ENCODE measurements at regions of chr4 and their contacts with region 1.

Region 1: DNA sequence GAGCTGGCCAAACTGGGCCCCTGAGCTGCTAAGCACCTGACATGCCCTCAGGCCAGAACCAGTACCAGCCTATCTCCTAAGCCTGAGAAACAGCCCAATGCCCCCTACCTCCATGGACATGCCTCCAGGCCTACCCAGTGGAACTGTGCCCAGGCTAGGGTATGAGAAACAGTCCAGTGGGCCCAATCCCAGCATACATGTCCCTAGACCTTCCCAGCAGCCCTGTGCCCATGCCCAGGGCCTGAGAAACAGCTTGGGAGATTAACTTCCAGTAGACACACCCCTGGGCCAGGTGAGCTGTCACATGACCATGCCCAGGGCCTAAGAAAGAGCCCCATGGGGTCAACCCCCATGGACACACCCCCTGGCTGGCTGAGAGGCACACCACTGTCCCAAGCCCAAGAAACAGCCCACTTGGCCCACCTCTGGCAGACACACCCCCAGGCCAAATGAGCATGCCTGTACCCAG is 78.8 kb downstream of the CBR4 start:
- DNase-seq: no peak
- H3K4me3 Mint-ChIP-seq: no peak overlapping the region
- H3K27ac Mint-ChIP-seq: no peak overlapping the region
- H3K4me1 Mint-ChIP-seq: no peaks in the 10 kb centered on the region
- H3K27me3 Mint-ChIP-seq: no peaks in the 10 kb centered on the region
- CTCF ChIP-seq: no peak

Region 2: DNA sequence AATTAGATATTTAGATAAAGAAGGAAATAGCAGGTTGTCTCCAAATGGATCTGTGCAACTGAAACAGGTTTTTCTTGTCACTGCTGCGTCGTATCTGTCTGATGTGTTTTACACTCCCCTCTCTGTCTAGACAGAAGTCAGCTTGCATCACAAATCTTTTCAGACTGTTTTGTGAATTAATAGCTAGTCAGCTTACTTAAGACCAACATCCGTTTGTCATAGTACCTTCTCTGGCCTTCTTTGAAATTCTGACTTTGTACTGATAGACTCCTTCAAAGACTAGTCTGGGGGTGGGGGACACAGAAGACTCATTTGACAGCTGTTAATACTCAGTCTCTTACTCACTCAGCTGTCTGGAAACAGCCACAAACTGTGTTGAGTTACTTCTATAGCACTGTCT is 236.6 kb before region 1 on chr4:
- CTCF ChIA-PET with region 1: no interaction called
- POLR2A ChIA-PET with region 1: no interaction called
- intact Hi-C with region 1: no loop called
- DNase-seq: no peak
- H3K4me3 Mint-ChIP-seq: no peak overlapping the region
- H3K27ac Mint-ChIP-seq: no peak overlapping the region
- H3K4me1 Mint-ChIP-seq: peaks cover 6% of the 10 kb centered on the region
- H3K27me3 Mint-ChIP-seq: no peaks in the 10 kb centered on the region
- CTCF ChIP-seq: no peak

Region 3: GRCh38 chr4:168917138-168917779 is 14.0 kb before region 1 on chr4:
- CTCF ChIA-PET with region 1: interaction called, 28 read pairs
- POLR2A ChIA-PET with region 1: no interaction called
- intact Hi-C with region 1: no loop called
- DNase-seq: peak; percentile 64
- H3K4me3 Mint-ChIP-seq: no peak overlapping the region
- H3K27ac Mint-ChIP-seq: no peak overlapping the region
- H3K4me1 Mint-ChIP-seq: peaks cover 5% of the 10 kb centered on the region
- H3K27me3 Mint-ChIP-seq: no peaks in the 10 kb centered on the region
- CTCF ChIP-seq: peak; percentile 52

Region 4: DNA sequence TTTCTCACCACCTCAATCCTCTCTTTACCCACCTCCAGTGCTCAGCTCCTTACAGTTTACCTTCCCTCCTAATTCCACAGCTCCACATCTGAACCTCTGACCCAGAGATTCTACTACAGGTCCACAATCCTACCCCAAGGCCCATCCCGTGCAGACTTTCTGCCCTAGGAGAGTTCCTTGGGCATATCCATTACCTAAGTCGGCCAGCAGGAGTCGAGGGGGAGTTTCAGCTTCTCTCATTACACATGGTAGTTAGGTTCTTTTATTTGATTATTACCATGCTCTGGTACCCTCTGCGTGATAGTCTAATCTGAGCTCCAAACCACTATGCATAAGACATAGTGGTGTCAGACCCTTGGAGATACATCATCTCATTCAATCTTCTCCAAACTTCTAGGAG is 221.7 kb after region 1 on chr4:
- CTCF ChIA-PET with region 1: no interaction called
- POLR2A ChIA-PET with region 1: no interaction called
- intact Hi-C with region 1: no loop called
- DNase-seq: no peak
- H3K4me3 Mint-ChIP-seq: no peak overlapping the region
- H3K27ac Mint-ChIP-seq: no peak overlapping the region
- H3K4me1 Mint-ChIP-seq: no peaks in the 10 kb centered on the region
- H3K27me3 Mint-ChIP-seq: no peaks in the 10 kb centered on the region
- CTCF ChIP-seq: no peak

Measured in MCF 10A (cell line).